Left cardiac atrium (tissue), 4 donors: ENCODE measurements at regions of chr14 and their contacts with region 1.

Region 1: GRCh38 chr14:102370305-102370809 is 7.6 kb downstream of the TECPR2 start:
- DNase-seq: peak; percentile 34
- ATAC-seq: peak; percentile 80 to 87

Region 2: DNA sequence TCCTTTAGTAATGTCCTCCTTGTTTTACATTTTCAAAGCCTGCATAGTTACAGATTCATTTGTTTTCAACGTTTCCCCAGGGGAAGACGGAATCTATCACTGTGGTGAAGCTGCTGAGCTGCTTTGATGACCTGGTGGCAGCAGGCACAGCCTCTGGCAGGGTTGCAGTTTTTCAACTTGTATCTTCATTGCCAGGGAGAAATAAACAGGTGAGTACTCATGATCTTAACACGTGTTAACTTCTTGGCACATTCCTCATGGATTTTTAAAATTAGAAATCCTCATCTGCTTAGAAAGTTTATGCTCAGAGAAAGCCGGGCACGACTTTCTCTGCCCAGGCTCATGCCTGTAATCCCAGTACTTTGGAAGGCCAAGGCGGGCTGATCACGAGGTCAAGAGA is 36.9 kb after region 1 on chr14:
- intact Hi-C with region 1: loop called in 1 of 2 experiments (anchors 2 kb)
- DNase-seq: no peak
- ATAC-seq: no peak